PC-9 (cell line): ENCODE measurements at regions of chr2 and their contacts with region 1.

Region 1: DNA sequence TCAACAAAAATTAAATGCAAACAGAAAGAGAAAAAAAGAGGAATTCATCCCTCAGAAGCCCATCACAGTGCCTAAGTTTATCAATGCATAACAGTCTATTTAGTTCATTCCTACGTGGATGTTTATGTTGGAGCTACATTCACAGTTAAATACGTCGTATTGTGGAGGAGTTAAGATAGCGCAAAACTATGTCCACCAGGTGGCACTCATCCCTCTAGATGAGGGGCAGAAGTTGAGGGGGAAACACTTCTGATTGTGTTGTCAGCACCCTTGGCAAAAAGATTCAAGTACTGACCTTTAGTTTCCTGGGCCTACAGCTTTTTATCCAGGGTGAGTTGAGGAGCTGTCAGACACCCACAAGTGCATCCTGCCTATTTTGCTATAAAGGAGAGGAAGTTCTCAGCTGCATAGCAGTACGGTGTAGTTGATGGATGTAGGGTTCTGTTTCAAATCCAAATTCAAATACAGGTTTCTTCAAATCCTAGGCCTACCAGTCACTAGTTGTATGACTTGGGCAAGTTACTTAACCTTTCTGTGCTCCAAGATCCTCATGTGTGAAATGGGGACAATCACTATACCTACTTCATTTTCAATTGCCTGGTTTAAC is 26.8 kb upstream of the MYO1B start:
- DNase-seq: peak in 1 of 2 experiments; percentile 19
- H3K4me3 ChIP-seq: no peak overlapping the region
- H3K27ac ChIP-seq: peak overlapping the region; percentile 94
- H3K4me1 ChIP-seq: peaks cover 43% of the 10 kb centered on the region
- H3K27me3 ChIP-seq: no peaks in the 10 kb centered on the region
- CTCF ChIP-seq: peak; percentile 51

Region 2: DNA sequence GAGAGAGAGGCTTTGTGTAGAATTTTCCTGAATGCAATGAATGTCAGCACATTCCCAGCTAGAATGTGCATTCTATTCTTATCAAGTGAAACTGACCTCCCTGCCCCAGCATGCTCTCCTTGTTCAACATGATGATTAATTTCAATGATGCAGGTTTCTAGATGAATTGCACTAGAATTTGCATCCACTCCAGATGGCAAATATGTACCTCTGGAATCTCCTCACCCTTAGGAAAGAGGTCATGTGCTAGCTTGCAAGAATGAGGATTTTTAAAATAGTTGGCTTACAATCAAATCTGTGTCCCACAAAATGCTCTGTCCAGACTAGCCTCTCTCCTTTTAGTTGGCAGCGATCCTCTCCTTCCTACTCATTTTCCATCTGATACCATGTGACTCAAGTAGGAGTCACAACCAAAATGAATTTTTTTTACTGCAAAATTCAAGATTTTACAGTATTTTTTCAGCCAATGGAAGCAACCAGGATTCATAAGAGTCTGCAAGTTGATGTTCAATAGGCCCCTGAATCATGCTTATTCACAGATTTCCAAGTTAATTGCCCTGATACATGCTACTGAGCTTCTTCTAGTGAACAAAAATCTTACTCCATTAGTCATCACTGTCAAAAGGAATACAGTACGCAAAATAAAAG is 46.6 kb before region 1 on chr2:
- CTCF ChIA-PET with region 1: interaction called, 4 read pairs
- POLR2A ChIA-PET with region 1: interaction called, 5 read pairs
- intact Hi-C with region 1: loop called (anchors 1 kb)
- DNase-seq: peak; percentile 33 to 85
- H3K4me3 ChIP-seq: no peak overlapping the region
- H3K27ac ChIP-seq: peak overlapping the region; percentile 91
- H3K4me1 ChIP-seq: peaks cover 61% of the 10 kb centered on the region
- H3K27me3 ChIP-seq: no peaks in the 10 kb centered on the region
- CTCF ChIP-seq: no peak

Region 3: DNA sequence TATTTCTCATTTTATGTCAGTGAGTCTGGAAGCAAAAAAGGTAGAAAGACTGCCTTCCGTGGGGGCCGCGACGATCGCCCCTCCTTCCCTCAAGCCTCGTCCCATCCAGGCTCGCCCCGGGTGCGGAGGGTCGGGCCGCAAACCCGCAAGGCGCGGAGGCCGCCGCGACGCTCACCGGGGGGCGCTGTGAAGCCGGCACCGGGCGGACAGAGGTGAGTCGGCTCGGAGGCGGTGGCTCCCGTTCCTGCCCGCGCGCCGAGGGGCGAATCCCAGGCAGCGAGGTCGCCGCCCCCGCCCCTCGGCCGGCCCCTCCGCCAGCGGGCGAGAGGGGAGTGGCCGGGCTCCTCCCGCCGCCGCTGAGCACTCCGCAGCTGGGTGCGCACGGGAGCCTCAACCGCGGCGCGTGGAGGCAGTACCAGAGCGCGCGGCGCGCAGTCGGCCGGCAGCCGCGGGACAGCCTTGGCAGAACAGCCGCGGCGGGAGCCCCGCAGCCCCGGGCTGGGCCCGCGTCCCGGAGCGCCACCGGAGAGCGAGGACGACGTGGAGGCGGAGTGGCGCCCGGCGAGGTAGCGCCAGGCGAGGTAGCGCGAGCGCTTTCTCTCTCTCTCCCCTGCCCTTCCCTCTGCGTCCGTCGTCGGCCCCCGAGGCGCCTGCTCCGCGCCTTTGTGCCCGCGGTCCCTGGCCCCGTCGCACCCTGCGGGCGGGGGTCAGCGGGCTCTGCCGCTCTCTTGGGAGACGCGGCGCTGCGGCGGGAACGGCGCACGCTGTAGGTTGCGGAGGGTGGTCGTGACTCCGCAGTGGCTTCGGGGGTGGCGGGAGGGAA is 26.9 kb after region 1 on chr2 and contains the start of gene MYO1B:
- CTCF ChIA-PET with region 1: no interaction called
- POLR2A ChIA-PET with region 1: no interaction called
- intact Hi-C with region 1: loop called (anchors 1 kb)
- DNase-seq: peak; percentile 61 to 83
- H3K4me3 ChIP-seq: peak within 1 kb of the TSS; percentile 92
- H3K27ac ChIP-seq: peak within 1 kb of the TSS; percentile 61
- H3K4me1 ChIP-seq: peaks cover 25% of the 10 kb centered on the region
- H3K27me3 ChIP-seq: no peaks in the 10 kb centered on the region
- CTCF ChIP-seq: peak; percentile 58
- total RNA-seq, gene MYO1B: 48.5 and 55.0 TPM in 2 replicates

Region 4: GRCh38 chr2:191501561-191502168 is 283.3 kb after region 1 on chr2:
- CTCF ChIA-PET with region 1: interaction called, 3 read pairs
- POLR2A ChIA-PET with region 1: no interaction called
- intact Hi-C with region 1: loop called (anchors 1 kb)
- DNase-seq: no peak
- H3K4me3 ChIP-seq: no peak overlapping the region
- H3K27ac ChIP-seq: no peak overlapping the region
- H3K4me1 ChIP-seq: no peaks in the 10 kb centered on the region
- H3K27me3 ChIP-seq: no peaks in the 10 kb centered on the region
- CTCF ChIP-seq: peak; percentile 57

Region 5: GRCh38 chr2:191999101-191999841 is 780.9 kb after region 1 on chr2:
- CTCF ChIA-PET with region 1: no interaction called
- POLR2A ChIA-PET with region 1: interaction called, 13 read pairs
- intact Hi-C with region 1: no loop called
- DNase-seq: no peak
- H3K4me3 ChIP-seq: no peak overlapping the region
- H3K27ac ChIP-seq: no peak overlapping the region
- H3K4me1 ChIP-seq: no peaks in the 10 kb centered on the region
- H3K27me3 ChIP-seq: no peaks in the 10 kb centered on the region
- CTCF ChIP-seq: no peak

Region 6: DNA sequence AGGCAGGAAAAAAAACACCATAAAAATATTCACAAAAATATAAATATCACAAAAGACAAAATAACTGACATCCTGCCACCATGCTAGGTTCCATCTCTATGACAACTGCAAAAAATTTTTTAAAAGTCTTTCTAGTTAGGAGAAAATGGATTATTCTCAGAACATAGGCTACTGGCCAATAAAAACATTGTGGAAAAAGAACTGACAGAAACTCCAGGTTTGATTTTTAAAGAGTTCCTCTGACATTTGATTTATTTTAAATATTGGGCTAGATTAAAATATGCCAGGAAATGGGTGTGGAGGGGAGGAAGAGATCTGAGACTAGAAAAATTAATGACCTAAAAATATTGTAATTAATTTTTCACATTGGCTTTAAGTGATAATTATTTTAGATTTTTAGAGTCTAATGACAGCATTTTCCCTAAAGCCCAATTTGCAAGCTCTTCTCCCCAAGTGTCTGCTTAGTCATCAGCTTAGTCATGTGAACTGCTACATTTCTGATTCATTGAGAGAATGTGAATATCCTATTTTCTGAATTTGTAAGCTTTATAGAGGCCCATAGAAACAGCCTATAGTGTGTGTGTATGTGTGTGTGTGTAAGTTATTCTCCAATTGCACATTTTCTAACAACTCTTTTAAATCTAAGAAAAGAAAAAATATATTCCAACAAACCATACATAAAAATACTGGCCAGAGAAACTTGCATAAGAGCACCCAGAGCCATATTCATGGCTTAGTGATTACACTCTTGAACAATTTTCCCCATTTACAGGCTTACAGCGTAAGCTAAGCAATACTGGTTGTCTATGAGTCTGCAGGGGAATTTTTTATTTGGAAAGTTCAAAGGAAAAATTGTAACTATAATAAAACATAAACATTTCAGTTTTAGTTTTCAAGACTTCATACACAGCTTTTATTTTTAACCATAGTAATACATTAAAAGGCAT is 927.9 kb after region 1 on chr2:
- CTCF ChIA-PET with region 1: no interaction called
- POLR2A ChIA-PET with region 1: interaction called, 11 read pairs
- intact Hi-C with region 1: no loop called
- DNase-seq: peak in 1 of 2 experiments; percentile 43
- H3K4me3 ChIP-seq: no peak overlapping the region
- H3K27ac ChIP-seq: no peak overlapping the region
- H3K4me1 ChIP-seq: no peaks in the 10 kb centered on the region
- H3K27me3 ChIP-seq: no peaks in the 10 kb centered on the region
- CTCF ChIP-seq: no peak